Psoas muscle (tissue), 8 donors: ENCODE measurements at regions of chr4 and their contacts with region 1.

Region 1: DNA sequence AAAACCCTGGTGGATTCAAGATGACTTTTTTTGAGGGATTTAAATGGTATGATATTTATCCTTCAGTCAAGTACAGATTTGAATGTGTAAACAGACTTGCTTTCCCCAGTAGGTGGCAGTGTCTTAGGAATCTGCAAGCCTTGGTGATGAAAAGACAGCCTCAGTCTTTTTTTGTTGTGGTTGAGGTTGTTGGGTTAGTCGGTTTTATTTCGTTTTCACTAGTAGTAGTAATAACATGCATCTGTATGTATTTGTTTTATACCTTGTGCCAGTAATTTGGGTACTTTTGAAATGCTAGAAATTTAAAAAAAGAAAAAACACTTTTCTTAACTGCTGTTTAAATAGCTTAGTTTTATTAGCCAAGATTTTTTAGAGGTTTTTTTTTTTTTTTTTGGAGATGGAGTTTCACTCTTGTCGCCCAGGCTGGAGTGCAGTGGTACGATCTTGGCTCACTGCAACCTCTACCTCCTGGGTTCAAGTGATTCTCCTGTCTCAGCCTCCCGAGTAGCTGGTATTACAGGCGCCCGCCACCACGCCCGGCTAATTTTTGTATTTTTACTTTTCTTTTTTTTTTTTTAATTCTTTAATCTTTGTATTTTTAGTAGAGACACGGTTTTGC is 39.2 kb downstream of the COPS4 start:
- DNase-seq: no peak
- ATAC-seq: peak; percentile 45 to 64 (median 59)
- H3K4me3 ChIP-seq: no peak overlapping the region
- H3K27ac ChIP-seq: no peak overlapping the region
- H3K4me1 ChIP-seq: peaks cover 11% of the 10 kb centered on the region
- H3K27me3 ChIP-seq: no peaks in the 10 kb centered on the region
- CTCF ChIP-seq: peak; percentile 66

Region 2: GRCh38 chr4:83252782-83253405 is 178.7 kb after region 1 on chr4:
- intact Hi-C with region 1: loop called in 1 of 2 experiments (anchors 10 kb)
- DNase-seq: peak in 1 of 2 donors; percentile 23
- ATAC-seq: peak in 1 of 4 donors; percentile 40
- H3K4me3 ChIP-seq: no peak overlapping the region
- H3K27ac ChIP-seq: no peak overlapping the region
- H3K4me1 ChIP-seq: peaks cover 3% of the 10 kb centered on the region
- H3K27me3 ChIP-seq: no peaks in the 10 kb centered on the region
- CTCF ChIP-seq: peak; percentile 38

Region 3: GRCh38 chr4:83262682-83263081 is 188.5 kb after region 1 on chr4:
- intact Hi-C with region 1: loop called (anchors 5 to 10 kb)
- DNase-seq: no peak
- ATAC-seq: no peak
- H3K4me3 ChIP-seq: no peak overlapping the region
- H3K27ac ChIP-seq: no peak overlapping the region
- H3K4me1 ChIP-seq: peaks cover 15% of the 10 kb centered on the region
- H3K27me3 ChIP-seq: no peaks in the 10 kb centered on the region
- CTCF ChIP-seq: no peak